ENCODE measurements at regions of chr5 and their contacts with region 1.

Region 1: GRCh38 chr5:139787568-139788293 is 7.9 kb upstream of the PSD2 start:
- DNase-seq: peak; percentile 94
- CTCF ChIP-seq: peak; percentile 95

Region 2: GRCh38 chr5:139482050-139482889 is 305.5 kb before region 1 on chr5 and contains the start of gene STING1:
- CTCF ChIA-PET with region 1: no interaction called
- POLR2A ChIA-PET with region 1: no interaction called
- DNase-seq: peak; percentile 66
- CTCF ChIP-seq: no peak

Region 3: GRCh38 chr5:139565411-139566305 is 222.1 kb before region 1 on chr5:
- CTCF ChIA-PET with region 1: no interaction called
- POLR2A ChIA-PET with region 1: no interaction called
- DNase-seq: peak; percentile 70
- CTCF ChIP-seq: no peak

Region 4: DNA sequence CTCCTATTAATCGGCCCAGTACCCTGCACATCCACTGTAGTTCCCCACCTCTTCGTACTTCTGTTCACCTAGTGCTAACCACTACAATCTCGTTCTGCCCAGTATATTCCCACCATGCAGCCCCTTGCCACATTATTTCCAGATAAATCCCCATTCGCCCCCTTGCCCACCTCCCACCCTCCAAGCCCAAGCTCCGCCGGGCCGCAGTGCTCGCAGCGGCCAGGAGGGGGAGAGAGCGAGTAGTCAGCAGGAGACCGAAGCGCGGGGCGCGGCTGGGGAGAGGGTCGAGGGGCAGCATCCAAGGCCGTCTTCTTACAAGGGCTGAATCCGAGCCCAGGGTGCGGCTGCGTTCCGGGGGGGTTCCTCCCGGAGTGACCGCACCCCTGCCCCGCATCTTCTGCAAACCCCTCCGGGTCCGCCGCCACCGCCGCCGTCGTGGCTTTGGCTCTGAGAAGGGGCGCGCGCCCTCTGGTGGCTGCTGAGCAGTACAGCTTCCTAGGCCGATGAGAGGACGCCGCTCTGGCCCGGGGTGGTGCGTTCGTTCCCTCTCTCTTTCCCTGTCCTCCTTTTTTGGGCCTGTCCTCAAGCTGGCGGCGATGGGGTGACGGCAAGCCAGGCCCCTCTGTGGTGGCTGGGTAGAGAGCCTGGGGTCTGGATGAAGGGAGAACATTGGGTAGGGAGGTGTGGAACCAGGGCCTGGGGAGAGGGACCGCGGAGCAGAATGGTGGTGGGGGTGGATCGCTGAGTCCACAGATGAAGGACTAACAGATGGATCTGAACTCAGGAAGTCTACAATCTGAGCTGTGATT is 22.1 kb before region 1 on chr5:
- CTCF ChIA-PET with region 1: interaction called, 17 read pairs
- POLR2A ChIA-PET with region 1: no interaction called
- DNase-seq: peak; percentile 87
- CTCF ChIP-seq: peak; percentile 95

Region 5: DNA sequence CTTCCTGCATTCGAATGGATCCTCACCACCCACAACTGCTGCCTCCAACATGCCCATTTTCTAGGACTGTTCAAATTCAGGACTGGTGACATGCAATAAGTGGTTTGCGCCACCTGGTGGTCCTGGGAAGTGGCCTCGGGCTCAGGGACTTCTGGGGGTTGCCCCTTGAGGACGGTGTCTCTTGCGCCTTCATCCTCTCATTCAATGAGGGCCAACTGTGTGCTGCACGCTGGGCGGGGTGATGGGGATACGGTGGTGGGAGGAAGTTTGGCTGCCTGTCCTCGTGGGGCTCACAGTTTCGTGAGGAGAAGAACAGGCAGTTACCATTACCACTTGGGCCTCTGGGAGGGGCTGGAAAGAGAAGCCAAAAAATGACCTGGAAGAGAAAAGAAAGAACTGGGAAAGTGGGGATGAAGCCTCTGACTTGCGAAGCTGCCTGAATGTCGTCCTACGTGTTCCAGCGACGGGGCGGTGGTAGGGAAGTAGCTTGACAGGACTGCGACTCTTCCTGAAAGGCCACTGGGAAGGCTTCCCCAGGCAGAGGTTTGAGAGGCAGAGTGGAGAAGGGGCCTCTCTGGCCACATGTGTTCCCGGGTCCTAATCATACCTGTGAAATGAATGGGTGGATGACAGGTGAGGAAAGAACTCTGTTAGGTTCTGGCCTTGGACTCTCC is 56.9 kb after region 1 on chr5:
- CTCF ChIA-PET with region 1: interaction called, 108 read pairs
- POLR2A ChIA-PET with region 1: no interaction called
- DNase-seq: peak; percentile 84
- CTCF ChIP-seq: peak; percentile 89

Region 6: DNA sequence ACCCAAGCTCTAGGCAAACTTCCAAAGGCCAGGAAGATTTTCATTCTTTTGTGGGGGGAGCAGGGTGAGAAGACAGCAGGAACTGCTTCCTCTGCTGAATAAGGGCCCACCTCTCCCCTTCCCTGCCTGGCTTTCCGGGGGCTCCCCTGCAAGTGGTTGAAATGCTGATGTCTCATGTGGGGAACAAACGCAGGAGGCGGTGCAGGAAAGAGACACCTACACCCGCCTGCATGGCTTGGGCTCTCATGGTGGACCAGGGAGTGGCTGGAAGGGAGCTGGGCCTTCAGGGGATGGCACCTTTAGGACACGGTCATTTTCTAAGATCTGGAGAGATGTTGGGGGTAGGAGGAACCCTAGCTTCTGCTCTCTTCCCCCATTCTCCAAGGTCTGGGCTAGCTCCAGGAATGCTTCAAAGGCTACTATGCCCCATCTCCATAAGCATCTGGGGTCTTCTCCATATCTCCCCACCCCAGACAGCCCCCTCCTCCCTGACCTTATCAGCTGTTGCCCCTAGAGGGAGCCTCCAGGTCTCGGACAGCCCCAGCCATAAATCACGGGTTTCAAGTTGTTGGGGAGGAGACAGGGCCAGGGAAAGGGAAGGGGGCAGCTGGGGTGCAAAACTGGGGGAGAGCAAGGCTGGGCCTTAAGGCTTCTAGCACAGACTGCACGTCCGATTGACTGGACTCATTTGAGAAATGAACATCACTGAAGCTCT is 84.5 kb after region 1 on chr5:
- CTCF ChIA-PET with region 1: interaction called, 20 read pairs
- POLR2A ChIA-PET with region 1: no interaction called
- DNase-seq: no peak
- CTCF ChIP-seq: peak; percentile 6

Region 7: GRCh38 chr5:139955053-139955605 is 167.4 kb after region 1 on chr5:
- CTCF ChIA-PET with region 1: interaction called, 35 read pairs
- POLR2A ChIA-PET with region 1: no interaction called
- DNase-seq: peak; percentile 61
- CTCF ChIP-seq: no peak

Region 8: GRCh38 chr5:140005145-140005591 is 217.4 kb after region 1 on chr5:
- CTCF ChIA-PET with region 1: interaction called, 17 read pairs
- POLR2A ChIA-PET with region 1: no interaction called
- DNase-seq: peak; percentile 70
- CTCF ChIP-seq: no peak

Region 9: DNA sequence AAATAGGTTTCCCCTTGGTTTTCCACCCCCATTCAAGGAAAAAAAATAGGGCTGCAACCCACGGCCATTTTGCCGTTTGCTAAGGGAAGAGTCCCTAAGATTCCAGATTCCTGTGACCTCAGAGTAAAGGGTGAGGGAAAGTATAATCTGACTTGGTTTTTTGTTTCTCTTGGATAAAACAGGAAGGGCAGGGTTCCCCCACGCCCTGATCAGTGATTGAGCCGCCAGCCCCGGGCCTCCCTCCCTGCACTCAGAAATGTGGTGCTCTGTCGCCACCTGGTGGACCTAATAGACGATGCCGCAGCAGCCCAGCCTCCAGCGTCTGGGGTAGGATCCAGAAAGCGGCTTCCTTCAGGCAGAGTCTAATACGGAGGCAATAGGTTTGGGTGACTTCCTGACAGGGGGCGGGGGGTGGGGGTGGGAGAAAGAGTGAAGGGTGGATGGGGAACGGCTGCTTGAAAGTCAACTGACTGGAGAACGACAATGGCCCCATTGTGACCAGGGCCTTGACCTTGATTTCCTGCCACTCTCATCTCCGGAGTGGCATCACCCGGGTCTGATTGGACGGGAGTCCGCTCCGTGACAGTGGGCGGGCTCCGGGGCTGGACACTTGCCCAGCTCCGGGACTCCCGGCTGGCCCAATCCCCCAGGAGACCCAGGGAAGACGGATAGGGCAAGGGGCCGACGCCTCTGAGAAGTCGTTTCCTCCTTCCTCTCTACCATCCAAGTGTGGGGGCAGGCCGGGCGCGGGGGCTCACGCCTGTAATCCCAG is 369.5 kb after region 1 on chr5:
- CTCF ChIA-PET with region 1: interaction called, 27 read pairs
- POLR2A ChIA-PET with region 1: no interaction called
- DNase-seq: peak; percentile 90
- CTCF ChIP-seq: peak; percentile 91

Measured in GM10248 (cell line).